Mammary epithelial cell (primary cell): ENCODE measurements at regions of chr2 and their contacts with region 1.

Region 1: DNA sequence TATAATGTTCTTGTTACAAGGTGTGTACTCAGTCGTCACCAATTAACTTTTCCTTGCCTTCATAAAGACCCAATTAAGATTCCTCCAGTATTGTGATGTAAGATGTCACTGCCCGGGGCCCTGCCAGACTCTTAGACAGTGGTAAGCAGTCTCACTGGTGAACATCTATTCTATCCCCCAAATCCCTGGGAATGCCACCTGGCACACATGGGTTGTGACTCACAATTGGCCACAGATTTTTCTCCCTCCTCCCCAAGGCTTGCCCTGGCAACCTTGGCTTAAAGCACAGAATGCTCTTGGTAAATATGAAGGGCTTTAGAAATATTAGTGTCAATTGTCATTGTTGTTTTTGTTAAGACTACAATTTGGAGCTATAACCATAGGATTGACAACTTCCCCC is 287.9 kb downstream of the ETAA1 start:
- DNase-seq: no peak
- H3K4me3 ChIP-seq: no peak overlapping the region
- H3K27ac ChIP-seq: no peak overlapping the region
- H3K4me1 ChIP-seq: no peaks in the 10 kb centered on the region
- H3K27me3 ChIP-seq: peaks cover 2% of the 10 kb centered on the region
- CTCF ChIP-seq: no peak

Region 2: DNA sequence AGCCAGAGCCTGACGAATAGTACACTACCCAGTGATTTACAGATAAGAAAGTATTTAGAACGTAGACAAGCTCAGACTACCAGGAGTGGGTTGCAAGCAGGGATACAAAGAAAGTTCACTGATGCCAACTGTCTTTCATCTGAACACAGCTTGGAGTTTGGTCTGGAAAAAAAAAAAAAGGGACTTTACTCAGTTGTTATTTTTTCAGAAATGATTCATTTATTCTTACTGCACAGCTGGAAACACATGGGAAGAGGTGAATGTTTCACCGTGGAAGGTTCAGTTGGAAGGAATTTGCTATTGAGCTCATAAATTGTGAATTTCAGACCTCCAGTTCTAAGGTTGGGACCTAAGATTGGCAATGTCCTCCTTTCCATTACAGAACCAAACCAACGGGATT is 28.1 kb before region 1 on chr2:
- CTCF ChIA-PET with region 1: no interaction called
- dilution Hi-C with region 1: no loop called
- in situ Hi-C with region 1: no loop called
- intact Hi-C with region 1: loop called (anchors 2 kb)
- DNase-seq: no peak
- H3K4me3 ChIP-seq: no peak overlapping the region
- H3K27ac ChIP-seq: no peak overlapping the region
- H3K4me1 ChIP-seq: no peaks in the 10 kb centered on the region
- H3K27me3 ChIP-seq: no peaks in the 10 kb centered on the region
- CTCF ChIP-seq: no peak

Region 3: GRCh38 chr2:67719351-67719750 is 34.4 kb after region 1 on chr2:
- CTCF ChIA-PET with region 1: no interaction called
- dilution Hi-C with region 1: no loop called
- in situ Hi-C with region 1: no loop called
- intact Hi-C with region 1: no loop called
- DNase-seq: no peak
- H3K4me3 ChIP-seq: no peak overlapping the region
- H3K27ac ChIP-seq: no peak overlapping the region
- H3K4me1 ChIP-seq: no peaks in the 10 kb centered on the region
- H3K27me3 ChIP-seq: no peaks in the 10 kb centered on the region
- CTCF ChIP-seq: no peak

Region 4: DNA sequence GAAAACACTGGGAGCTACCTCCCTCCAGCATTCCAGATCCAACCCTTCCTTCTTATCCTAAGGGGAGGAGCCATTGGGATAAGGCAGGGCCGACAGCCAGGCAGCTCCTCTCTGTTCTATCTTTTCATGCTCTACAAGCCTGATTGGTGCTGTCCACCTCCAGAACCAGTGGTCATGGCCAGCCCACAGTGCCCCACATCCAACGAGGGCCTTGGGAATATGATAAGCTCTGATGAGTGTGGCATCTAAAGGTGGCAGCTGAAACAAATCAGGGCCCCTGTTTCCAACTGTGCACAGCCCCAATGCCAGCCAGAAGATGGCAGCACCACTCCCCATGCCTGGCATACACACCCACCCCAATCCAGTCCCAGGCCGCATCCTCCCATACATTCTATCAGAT is 48.5 kb after region 1 on chr2:
- CTCF ChIA-PET with region 1: no interaction called
- dilution Hi-C with region 1: no loop called
- in situ Hi-C with region 1: no loop called
- intact Hi-C with region 1: no loop called
- DNase-seq: peak; percentile 6
- H3K4me3 ChIP-seq: no peak overlapping the region
- H3K27ac ChIP-seq: no peak overlapping the region
- H3K4me1 ChIP-seq: no peaks in the 10 kb centered on the region
- H3K27me3 ChIP-seq: no peaks in the 10 kb centered on the region
- CTCF ChIP-seq: peak; percentile 50 to 83

Region 5: DNA sequence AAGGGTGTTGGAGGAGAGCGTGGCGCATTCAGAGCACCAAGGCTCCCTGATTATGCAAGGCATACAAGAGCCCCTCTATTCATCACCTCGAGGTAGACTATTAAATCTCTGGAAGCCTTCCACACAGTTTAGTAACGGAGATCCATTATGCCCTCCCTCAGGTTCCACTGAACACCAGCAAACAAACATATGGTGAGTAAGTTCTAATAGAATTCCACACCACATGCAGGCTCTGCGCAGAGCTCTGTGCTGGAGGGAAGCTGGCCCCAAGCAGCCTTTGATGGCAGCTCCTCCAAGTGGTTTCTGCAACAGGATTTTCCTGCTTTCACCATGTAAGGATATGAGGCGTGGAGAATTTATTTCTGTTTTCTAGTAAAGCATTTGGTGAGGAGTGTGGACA is 139.2 kb after region 1 on chr2:
- CTCF ChIA-PET with region 1: no interaction called
- dilution Hi-C with region 1: no loop called
- in situ Hi-C with region 1: no loop called
- intact Hi-C with region 1: loop called (anchors 5 kb)
- DNase-seq: no peak
- H3K4me3 ChIP-seq: no peak overlapping the region
- H3K27ac ChIP-seq: no peak overlapping the region
- H3K4me1 ChIP-seq: peaks cover 12% of the 10 kb centered on the region
- H3K27me3 ChIP-seq: no peaks in the 10 kb centered on the region
- CTCF ChIP-seq: no peak